AG04449 (cell line): ENCODE measurements at regions of chr7 and their contacts with region 1.

Region 1: GRCh38 chr7:6256677-6257535 is 15.5 kb downstream of the CYTH3 start:
- DNase-seq: no peak
- H3K4me3 ChIP-seq: no peak overlapping the region
- CTCF ChIP-seq: no peak

Region 2: DNA sequence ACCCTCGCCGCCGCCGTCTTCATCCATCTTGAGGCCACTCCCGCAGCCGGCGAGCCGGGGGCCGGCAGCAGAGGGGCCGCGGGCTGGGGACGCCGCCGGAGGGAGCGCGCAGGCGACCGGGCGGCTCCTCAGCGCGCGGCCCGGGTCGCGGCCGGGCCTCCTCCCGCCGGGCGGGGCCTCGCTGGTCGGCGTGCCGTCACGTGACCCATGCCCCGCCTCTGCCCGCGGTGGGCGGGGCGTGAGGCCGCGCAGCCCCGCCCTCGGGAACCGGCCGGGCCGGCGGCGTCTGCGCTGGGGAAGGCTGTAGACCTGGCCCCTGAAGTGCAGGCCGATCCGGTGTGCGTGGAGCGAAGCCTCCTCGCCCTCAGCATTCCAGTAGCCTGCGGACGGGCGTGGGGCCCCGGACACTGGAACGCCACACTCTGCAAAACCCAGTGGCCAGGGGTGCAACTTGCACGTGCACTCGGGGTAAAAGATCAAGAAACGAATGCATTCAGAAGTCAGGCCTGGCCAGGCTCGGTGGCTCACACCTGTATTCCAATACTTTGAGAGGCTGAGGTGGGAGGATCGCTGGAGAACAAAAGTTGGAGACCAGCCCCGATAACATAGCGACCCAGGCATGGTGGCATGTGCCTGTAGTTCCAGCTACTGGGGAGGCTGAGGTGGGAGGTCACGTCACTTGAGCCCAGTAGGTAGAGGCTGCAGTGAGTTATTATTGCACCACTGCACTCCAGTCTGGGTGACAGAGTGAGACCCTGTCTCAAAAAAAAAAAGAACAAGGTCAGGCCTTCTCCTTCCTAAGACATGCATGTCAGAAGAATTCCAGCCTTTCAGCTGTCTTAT is 15.8 kb after region 1 on chr7 and contains the start of gene CYTH3:
- CTCF ChIA-PET with region 1: interaction called, 31 read pairs
- POLR2A ChIA-PET with region 1: interaction called, 3 read pairs
- DNase-seq: no peak
- H3K4me3 ChIP-seq: peak within 1 kb of the TSS; percentile 97
- CTCF ChIP-seq: no peak